MCF 10A (cell line): ENCODE measurements at regions of chr12 and their contacts with region 1.

Region 1: DNA sequence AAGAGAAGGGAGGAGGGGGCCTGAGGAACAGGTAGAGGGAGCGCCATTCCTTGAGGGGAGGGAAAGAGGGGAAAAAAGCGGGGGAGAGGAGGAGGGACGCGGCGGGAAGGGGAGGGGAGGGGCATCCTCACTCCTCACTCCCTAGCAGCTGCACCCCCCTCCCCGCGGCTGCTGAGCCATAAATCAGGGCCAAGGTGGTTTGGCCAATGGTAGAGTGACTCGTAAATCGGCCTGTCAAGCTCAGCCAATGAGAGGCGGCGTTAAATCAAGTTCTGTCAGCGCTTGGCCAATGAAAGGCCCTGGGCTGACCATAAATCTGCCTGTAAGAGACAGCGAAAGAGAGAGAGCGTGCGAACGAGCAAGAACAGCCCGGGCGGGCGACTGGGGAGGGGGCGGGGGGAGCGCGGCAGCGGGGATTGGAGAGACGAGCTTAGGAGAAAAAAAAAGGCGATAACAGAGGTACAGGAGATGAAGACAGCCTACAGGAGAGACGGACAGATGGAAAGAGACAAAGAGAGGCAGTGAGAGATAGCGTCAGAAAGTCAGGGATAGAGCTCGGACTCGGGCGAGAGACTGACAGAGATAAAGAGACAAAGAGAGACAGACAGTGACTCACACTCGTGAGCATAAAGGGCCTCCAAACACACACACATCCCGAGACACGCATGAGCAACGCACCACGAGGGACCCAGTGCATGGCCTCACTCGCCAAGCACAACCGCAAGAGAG is 5.1 kb downstream of the GPR84 start:
- DNase-seq: peak; percentile 99
- H3K4me3 Mint-ChIP-seq: no peak overlapping the region
- H3K27ac Mint-ChIP-seq: no peak overlapping the region
- H3K4me1 Mint-ChIP-seq: peaks cover 23% of the 10 kb centered on the region
- H3K27me3 Mint-ChIP-seq: no peaks in the 10 kb centered on the region
- CTCF ChIP-seq: no peak

Region 2: GRCh38 chr12:54220092-54220557 is 139.1 kb before region 1 on chr12:
- CTCF ChIA-PET with region 1: interaction called, 40 read pairs
- POLR2A ChIA-PET with region 1: interaction called, 4 read pairs
- intact Hi-C with region 1: loop called (anchors 1 kb)
- DNase-seq: peak; percentile 75
- H3K4me3 Mint-ChIP-seq: no peak overlapping the region
- H3K27ac Mint-ChIP-seq: no peak overlapping the region
- H3K4me1 Mint-ChIP-seq: peaks cover 18% of the 10 kb centered on the region
- H3K27me3 Mint-ChIP-seq: no peaks in the 10 kb centered on the region
- CTCF ChIP-seq: peak; percentile 78

Region 3: GRCh38 chr12:54259194-54260011 is 99.8 kb before region 1 on chr12:
- CTCF ChIA-PET with region 1: interaction called, 6 read pairs
- POLR2A ChIA-PET with region 1: interaction called, 10 read pairs
- intact Hi-C with region 1: no loop called
- DNase-seq: peak; percentile 76
- H3K4me3 Mint-ChIP-seq: peak overlapping the region; percentile 63
- H3K27ac Mint-ChIP-seq: peak overlapping the region; percentile 83
- H3K4me1 Mint-ChIP-seq: peaks cover 14% of the 10 kb centered on the region
- H3K27me3 Mint-ChIP-seq: no peaks in the 10 kb centered on the region
- CTCF ChIP-seq: no peak

Region 4: DNA sequence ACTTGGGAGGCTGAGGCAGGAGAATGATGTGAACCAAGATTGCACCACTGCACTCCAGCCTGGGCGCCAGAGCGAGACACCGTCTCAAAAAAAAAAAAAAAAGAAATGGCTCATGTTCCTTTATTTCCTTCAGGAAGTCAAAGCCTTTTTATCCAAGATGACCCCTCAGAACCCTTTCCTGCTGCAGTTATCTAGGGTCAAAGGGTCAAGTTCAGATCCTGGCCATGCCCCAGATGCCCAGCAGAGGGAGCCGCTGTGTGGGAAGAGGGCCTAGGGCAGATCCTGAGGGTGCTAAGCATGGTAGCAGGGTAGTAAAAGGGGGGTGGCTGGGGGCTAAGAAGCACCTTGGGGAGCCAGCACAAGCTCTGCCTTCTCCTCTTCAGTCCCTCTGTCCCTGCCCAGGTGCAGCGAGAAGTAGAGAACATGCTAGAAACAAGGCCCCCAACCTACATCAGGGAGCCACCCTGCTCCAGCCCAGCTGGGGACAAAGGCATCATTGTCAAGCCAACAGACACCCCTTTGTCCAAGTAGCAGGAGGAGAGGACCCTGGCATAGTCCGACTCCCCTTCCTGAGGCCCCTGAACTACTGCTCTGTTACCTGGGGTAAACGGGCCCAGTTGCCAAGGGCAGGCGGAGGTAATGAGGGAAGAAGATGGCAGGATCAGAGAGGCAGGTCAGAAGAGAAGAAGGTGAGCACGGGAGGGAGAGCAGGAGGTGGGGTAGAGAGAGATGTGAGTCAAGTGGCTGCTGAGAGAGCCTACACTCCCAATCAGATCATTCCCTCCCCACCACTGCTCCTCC is 64.8 kb before region 1 on chr12:
- CTCF ChIA-PET with region 1: interaction called, 57 read pairs
- POLR2A ChIA-PET with region 1: interaction called, 6 read pairs
- intact Hi-C with region 1: loop called (anchors 1 kb)
- DNase-seq: peak; percentile 63
- H3K4me3 Mint-ChIP-seq: no peak overlapping the region
- H3K27ac Mint-ChIP-seq: no peak overlapping the region
- H3K4me1 Mint-ChIP-seq: peaks cover 7% of the 10 kb centered on the region
- H3K27me3 Mint-ChIP-seq: no peaks in the 10 kb centered on the region
- CTCF ChIP-seq: peak; percentile 81

Region 5: DNA sequence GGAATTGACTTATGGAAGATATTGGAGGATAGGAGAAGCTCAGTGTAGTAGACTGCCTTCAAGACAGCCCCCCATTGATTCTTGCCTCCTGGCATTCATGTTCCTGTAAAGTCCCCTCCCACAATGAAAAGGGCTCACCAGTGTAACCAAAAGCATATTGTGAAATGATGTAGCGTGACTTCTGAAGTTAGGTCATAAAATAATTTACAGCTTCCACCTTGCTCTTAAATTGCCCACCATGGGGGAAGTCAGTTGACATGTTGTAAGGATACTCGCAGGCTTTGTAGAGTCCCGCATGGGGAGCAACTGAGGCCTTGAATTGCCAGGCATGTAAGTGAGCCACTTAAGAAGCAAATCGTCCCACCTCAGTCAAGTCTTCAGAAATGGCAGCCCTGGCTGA is 89.1 kb after region 1 on chr12:
- CTCF ChIA-PET with region 1: no interaction called
- POLR2A ChIA-PET with region 1: no interaction called
- intact Hi-C with region 1: no loop called
- DNase-seq: no peak
- H3K4me3 Mint-ChIP-seq: no peak overlapping the region
- H3K27ac Mint-ChIP-seq: no peak overlapping the region
- H3K4me1 Mint-ChIP-seq: no peaks in the 10 kb centered on the region
- H3K27me3 Mint-ChIP-seq: no peaks in the 10 kb centered on the region
- CTCF ChIP-seq: no peak

Region 6: DNA sequence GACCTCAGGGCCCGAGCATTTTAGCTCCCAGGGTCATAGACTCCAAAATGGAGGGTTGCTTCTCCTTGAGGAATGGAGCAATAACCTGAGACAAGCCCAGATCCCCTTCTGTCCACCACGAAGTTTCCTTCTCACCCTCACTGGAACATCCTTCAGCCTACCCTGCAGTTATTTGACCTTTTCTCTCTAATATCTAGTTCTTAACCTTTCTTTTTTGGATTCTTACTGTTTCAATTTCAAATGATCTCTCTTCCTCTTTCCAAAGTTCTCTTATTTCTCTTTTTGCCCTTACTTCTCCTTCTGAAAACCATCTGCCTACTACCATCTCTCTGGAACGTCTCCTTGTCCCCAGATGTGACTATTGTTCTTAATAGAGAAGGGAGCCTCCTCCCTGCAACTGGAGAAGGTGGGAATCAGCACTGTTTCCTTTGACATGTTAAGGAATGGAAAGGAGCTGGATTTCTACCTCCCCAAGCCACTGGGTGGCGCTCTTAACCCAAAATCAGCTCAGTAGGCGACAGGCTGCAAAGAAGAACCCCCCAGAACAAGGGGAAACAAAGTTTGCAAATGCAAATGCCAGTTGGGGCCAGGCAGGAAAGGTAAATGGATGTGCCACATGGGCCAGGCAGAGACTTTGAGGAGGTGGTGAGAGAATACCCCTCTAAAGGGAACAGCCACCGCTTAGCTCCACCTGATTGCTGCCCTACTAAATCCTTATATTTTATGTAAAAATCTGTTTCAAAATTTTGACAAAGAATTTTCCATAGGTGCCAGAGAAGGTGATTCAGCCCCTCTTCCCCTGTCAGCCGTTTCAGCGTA is 167.8 kb after region 1 on chr12:
- CTCF ChIA-PET with region 1: no interaction called
- POLR2A ChIA-PET with region 1: no interaction called
- intact Hi-C with region 1: no loop called
- DNase-seq: peak; percentile 58
- H3K4me3 Mint-ChIP-seq: no peak overlapping the region
- H3K27ac Mint-ChIP-seq: no peak overlapping the region
- H3K4me1 Mint-ChIP-seq: no peaks in the 10 kb centered on the region
- H3K27me3 Mint-ChIP-seq: peaks cover 85% of the 10 kb centered on the region
- CTCF ChIP-seq: peak; percentile 58